Activated CD8-positive, alpha-beta T cell treated with anti-CD3 and anti-CD28 coated beads, Interleukin-2, amount 10 ng/mL, durations not matched to agents 7 days and 5 days (primary cell): ENCODE measurements at regions of chr11 and their contacts with region 1.

Region 1: DNA sequence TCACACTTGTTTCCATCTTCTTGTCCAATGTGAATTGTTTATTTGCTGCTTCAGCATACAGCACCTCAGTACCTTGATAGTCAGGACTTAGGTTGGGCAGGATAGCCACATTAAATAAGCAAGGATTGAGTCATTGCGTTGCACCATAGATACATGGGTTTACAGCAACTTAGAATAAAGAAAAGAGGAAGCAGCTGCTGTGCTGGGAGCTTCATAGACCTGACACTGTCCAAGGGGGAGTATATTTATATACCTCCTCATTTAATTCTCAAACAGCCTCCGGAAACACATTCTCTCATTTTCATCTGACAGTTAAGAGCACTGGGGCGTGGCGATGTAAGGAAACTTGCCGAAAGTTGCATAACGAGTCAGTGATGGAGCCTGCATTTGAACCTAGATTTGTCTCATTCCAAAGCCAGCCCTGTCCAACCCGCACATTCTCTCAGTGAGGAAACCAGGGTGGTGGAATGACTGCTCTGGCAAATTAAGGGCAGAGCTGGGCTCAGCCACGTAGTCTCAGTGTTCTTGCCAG is 42.2 kb downstream of the UBASH3B start:
- DNase-seq: peak; percentile 67
- ATAC-seq: peak; percentile 74
- H3K4me3 Mint-ChIP-seq: peak overlapping the region; percentile 57
- H3K27ac Mint-ChIP-seq: peak overlapping the region; percentile 90
- H3K4me1 Mint-ChIP-seq: peaks cover 89% of the 10 kb centered on the region
- H3K27me3 Mint-ChIP-seq: no peaks in the 10 kb centered on the region

Region 2: DNA sequence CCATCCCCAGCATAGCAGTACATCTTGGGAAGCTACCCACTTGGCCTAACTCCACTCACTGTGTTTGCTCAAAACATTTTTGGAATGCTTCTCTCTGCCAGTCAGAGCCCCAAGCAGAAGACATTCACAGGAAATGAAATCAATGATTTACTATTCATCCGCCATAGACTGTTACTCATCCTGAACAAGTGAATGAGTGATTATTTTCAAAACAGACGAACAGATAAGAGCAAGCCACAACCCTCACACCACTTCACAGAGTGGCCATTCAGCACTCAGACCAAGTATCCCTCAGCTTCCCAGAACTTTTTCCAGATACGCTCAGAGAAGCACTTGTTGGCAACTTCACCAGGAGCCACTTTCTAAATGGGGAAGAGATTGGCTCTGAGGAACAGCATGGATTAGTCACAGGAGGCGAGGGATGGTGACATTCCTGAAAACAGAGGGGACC is 55.2 kb before region 1 on chr11:
- CTCF ChIA-PET with region 1: no interaction called
- POLR2A ChIA-PET with region 1: no interaction called
- DNase-seq: no peak
- ATAC-seq: no peak
- H3K4me3 Mint-ChIP-seq: no peak overlapping the region
- H3K27ac Mint-ChIP-seq: no peak overlapping the region
- H3K4me1 Mint-ChIP-seq: peaks cover 9% of the 10 kb centered on the region
- H3K27me3 Mint-ChIP-seq: peaks cover 3% of the 10 kb centered on the region

Region 3: DNA sequence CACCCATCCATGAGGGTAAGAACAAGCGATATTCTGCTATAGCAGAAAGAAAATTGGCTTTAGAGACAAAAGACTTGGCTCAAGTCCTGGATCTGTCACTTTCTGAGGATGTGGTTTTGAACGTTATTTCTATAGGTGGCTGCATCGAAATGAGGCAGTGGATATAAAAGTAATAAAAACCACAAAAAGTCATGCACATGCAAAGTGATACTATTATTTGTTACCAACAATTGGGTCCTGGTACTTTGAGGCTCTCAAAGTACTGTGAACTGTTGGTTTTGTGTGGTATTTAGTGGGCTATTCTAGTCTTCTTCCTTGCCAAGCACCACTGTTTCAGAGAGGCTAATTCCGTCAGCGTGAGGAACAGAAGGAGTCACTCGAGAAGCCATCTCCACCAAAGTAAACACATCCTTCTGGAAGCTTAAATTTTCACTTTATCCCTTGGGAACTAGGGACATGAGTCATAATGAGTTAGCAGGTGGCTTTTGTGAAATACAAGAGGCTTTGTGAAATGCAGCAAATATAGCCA is 29.1 kb before region 1 on chr11:
- CTCF ChIA-PET with region 1: interaction called, 22 read pairs
- POLR2A ChIA-PET with region 1: interaction called, 22 read pairs
- DNase-seq: peak; percentile 37
- ATAC-seq: peak; percentile 66
- H3K4me3 Mint-ChIP-seq: peak overlapping the region; percentile 35
- H3K27ac Mint-ChIP-seq: peak overlapping the region; percentile 94
- H3K4me1 Mint-ChIP-seq: peaks cover 74% of the 10 kb centered on the region
- H3K27me3 Mint-ChIP-seq: no peaks in the 10 kb centered on the region

Region 4: DNA sequence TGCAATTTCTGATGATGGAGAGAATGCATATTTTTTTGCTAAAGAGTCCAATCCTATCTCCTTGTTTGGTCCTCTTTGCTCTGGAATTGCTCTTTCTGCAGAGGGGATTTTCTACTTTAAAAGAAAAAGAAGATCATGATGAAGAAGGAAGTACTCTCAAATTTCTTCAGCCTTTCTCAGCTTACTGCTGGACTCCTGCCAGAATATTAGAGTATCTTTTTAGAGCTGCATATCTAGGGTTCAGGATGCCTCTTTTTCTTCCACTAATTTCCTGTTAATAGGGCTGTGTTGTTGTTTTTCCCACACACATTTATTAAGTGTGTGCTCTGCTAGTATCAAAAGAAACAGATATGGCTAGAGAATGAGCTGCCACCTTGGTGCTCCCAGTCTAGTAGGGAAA is 24.0 kb before region 1 on chr11:
- CTCF ChIA-PET with region 1: interaction called, 22 read pairs
- POLR2A ChIA-PET with region 1: interaction called, 22 read pairs
- DNase-seq: no peak
- ATAC-seq: no peak
- H3K4me3 Mint-ChIP-seq: no peak overlapping the region
- H3K27ac Mint-ChIP-seq: peak overlapping the region; percentile 8
- H3K4me1 Mint-ChIP-seq: peaks cover 71% of the 10 kb centered on the region
- H3K27me3 Mint-ChIP-seq: no peaks in the 10 kb centered on the region

Region 5: DNA sequence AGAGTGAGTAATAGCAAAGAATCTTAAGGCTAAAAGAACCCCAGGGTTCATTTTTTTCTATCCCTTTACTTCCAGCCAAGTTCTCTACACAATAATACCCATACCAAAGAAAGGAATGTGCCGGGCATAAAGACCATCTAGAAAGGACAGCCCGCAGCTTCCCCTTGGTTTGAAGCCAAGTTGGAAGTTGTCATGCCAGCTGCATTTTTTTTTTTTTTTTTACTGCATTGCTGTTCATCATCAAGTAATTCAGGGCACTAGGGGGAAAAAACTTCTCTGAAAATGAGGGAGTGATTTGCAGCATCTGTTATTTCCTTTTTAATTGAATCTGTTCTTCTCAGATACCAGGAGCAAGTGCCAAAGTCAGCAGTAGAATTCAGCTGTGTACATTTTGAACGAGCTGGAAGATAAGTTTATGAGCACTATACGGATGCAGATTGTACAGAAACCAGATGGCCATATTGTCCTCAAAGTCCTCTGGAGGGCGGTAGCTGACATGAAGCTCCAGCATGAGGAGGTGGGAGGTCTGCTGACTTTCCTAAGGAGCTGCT is 14.2 kb after region 1 on chr11:
- CTCF ChIA-PET with region 1: interaction called, 11 read pairs
- POLR2A ChIA-PET with region 1: interaction called, 19 read pairs
- DNase-seq: no peak
- ATAC-seq: no peak
- H3K4me3 Mint-ChIP-seq: no peak overlapping the region
- H3K27ac Mint-ChIP-seq: no peak overlapping the region
- H3K4me1 Mint-ChIP-seq: peaks cover 79% of the 10 kb centered on the region
- H3K27me3 Mint-ChIP-seq: no peaks in the 10 kb centered on the region

Region 6: GRCh38 chr11:122717264-122717867 is 19.7 kb after region 1 on chr11:
- CTCF ChIA-PET with region 1: interaction called, 12 read pairs
- POLR2A ChIA-PET with region 1: interaction called, 23 read pairs
- DNase-seq: peak; percentile 93
- ATAC-seq: peak; percentile 88
- H3K4me3 Mint-ChIP-seq: peak overlapping the region; percentile 67
- H3K27ac Mint-ChIP-seq: peak overlapping the region; percentile 96
- H3K4me1 Mint-ChIP-seq: peaks cover 95% of the 10 kb centered on the region
- H3K27me3 Mint-ChIP-seq: no peaks in the 10 kb centered on the region

Region 7: GRCh38 chr11:122743949-122744348 is 46.2 kb after region 1 on chr11:
- CTCF ChIA-PET with region 1: interaction called, 14 read pairs
- POLR2A ChIA-PET with region 1: interaction called, 19 read pairs
- DNase-seq: peak; percentile 88
- ATAC-seq: peak; percentile 83
- H3K4me3 Mint-ChIP-seq: no peak overlapping the region
- H3K27ac Mint-ChIP-seq: no peak overlapping the region
- H3K4me1 Mint-ChIP-seq: peaks cover 18% of the 10 kb centered on the region
- H3K27me3 Mint-ChIP-seq: no peaks in the 10 kb centered on the region

Region 8: DNA sequence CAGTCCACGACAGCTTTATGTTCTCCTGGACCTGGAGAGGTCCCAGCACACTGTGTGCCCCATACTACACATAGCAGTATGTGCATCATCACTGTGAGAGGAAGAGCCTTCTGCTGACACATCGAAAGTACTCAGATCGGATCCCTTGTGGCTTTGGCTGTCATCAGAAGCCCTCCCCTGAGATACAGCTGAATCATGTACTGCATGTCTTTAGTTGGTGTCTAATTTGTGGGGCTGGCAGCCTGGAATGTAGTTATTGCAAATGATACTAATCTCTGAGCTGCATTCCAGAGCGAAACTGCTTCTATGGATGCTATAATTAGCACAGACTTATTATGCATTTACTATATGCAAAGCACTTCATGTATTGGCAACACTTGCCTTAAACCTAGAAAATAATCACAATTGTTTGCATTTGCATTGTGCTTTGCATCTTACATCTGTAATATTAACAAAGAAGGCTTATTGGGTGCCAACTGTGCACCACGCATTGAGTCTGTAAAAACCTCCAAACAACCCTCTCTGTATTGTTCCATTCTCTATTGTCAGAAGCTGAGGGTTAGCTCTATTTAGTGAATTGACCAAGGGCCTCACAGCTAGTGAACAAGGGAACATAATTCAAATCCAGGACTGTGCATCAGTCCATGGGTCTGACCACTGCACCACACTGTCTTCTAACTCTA is 51.4 kb after region 1 on chr11:
- CTCF ChIA-PET with region 1: interaction called, 131 read pairs
- POLR2A ChIA-PET with region 1: interaction called, 19 read pairs
- DNase-seq: peak; percentile 80
- ATAC-seq: peak; percentile 72
- H3K4me3 Mint-ChIP-seq: peak overlapping the region; percentile 24
- H3K27ac Mint-ChIP-seq: peak overlapping the region; percentile 69
- H3K4me1 Mint-ChIP-seq: peaks cover 39% of the 10 kb centered on the region
- H3K27me3 Mint-ChIP-seq: peaks cover 2% of the 10 kb centered on the region